Activated CD4-positive, alpha-beta memory T cell treated with anti-CD3 and anti-CD28 coated beads, Interleukin-2, amount 10 ng/mL, durations not matched to agents 7 days and 5 days (primary cell): ENCODE measurements at regions of chr3 and their contacts with region 1.

Region 1: DNA sequence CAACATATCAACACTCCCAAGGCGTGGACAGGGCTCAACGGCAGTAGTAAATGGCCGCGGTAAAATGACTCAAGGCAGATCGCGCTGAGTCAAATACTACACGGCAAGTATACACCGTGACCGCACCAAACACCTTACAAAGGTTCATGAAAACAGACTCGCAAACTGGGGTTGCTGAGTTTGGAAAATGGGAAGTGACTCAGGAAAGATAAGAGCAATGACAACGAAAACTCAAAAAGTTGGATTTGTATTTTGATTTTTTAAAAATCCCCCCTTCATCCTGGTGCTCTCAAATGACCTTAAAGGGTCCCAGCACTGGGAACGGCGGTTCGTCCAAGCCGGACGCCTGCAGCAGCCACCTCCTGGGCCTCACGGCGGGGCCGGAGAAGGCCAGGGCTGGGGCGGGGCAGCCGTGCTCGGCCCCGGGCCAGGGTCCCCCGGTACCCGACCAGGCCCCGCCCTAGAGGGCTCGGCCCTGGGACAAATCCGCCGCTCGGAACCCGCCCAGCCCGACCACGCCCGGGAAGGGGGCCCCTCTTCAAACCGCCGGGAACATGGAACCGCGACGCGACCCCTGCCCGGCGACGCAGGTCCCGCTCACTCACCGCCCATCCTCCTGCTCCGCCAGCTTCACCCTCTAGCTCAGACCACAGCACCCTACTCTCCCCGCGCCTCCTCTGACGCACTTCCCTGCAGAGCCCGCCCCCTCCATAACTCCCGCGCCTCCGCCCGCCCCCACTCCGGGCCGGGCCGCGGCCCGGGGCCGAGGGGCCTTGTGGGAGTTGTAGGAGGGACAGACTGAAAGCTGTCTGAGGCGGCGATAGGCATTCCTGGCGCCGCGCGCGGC is at the start of gene CLDND1:
- DNase-seq: peak; percentile 98
- H3K4me3 Mint-ChIP-seq: peak within 1 kb of the TSS; percentile 98
- H3K27ac Mint-ChIP-seq: peak within 1 kb of the TSS; percentile 92
- H3K4me1 Mint-ChIP-seq: peaks cover 74% of the 10 kb centered on the region
- H3K27me3 Mint-ChIP-seq: no peaks in the 10 kb centered on the region
- total RNA-seq, gene CLDND1: 673 to 683 TPM

Region 2: DNA sequence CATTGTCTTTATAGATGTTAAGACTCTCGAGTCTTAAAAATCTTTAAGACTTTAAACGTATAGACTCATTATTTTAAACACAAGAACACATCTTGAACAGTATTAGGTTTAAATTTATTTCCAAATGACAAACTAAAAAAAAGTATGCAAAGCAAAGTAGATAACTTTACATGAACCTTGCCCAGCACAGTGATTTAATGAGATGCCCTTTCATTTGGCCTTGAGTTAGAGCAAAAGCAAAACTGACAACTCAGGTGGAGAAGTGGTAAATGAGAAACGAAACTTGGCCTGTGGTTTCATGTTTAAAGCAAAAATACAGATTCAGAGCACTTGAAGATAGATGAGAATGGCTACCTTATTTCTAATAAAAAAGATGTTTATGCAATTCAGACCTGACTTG is 17.9 kb after region 1 on chr3:
- CTCF ChIA-PET with region 1: interaction called, 9 read pairs
- POLR2A ChIA-PET with region 1: interaction called, 372 read pairs
- DNase-seq: no peak
- H3K4me3 Mint-ChIP-seq: peak overlapping the region; percentile 23
- H3K27ac Mint-ChIP-seq: peak overlapping the region; percentile 80
- H3K4me1 Mint-ChIP-seq: peaks cover 71% of the 10 kb centered on the region
- H3K27me3 Mint-ChIP-seq: no peaks in the 10 kb centered on the region

Region 3: GRCh38 chr3:98581474-98581873 is 59.0 kb after region 1 on chr3:
- CTCF ChIA-PET with region 1: no interaction called
- POLR2A ChIA-PET with region 1: interaction called, 10 read pairs
- DNase-seq: no peak
- H3K4me3 Mint-ChIP-seq: no peak overlapping the region
- H3K27ac Mint-ChIP-seq: no peak overlapping the region
- H3K4me1 Mint-ChIP-seq: peaks cover 60% of the 10 kb centered on the region
- H3K27me3 Mint-ChIP-seq: no peaks in the 10 kb centered on the region

Region 4: DNA sequence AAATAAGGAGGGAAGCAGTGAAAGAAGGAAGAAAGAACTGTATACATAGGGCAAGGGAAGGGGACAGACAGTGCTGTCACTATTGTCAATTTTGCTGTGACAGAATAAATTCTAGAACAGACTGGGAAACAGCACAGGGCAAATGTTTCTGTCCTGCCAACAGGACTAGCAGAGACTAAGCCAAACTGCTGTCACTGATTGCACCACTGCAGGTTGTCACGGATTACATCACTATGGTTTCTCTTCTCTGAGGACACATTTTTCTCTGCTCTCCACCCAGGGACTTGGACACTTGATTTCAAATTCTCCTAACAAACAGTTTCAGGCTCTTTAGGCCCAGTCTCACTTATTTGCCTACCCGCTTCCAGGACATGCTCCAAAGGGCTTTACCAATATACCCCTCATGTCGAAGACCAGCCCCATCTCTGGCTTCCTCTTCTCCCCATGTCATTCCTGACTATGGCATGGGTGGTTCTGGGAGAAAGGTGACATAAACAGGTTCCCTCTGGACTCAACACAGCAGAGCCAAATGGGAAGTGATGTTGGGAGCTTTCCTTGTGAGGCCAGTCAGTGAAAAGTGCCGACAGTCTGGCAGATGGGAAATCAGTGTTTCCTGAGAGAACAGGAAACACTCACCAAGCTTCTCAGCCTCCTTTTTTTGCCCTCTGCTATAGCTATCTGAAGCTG is 170.5 kb after region 1 on chr3:
- CTCF ChIA-PET with region 1: no interaction called
- POLR2A ChIA-PET with region 1: no interaction called
- DNase-seq: no peak
- H3K4me3 Mint-ChIP-seq: no peak overlapping the region
- H3K27ac Mint-ChIP-seq: no peak overlapping the region
- H3K4me1 Mint-ChIP-seq: no peaks in the 10 kb centered on the region
- H3K27me3 Mint-ChIP-seq: no peaks in the 10 kb centered on the region